GM23248 (cell line): ENCODE measurements at regions of chr5 and their contacts with region 1.

Region 1: DNA sequence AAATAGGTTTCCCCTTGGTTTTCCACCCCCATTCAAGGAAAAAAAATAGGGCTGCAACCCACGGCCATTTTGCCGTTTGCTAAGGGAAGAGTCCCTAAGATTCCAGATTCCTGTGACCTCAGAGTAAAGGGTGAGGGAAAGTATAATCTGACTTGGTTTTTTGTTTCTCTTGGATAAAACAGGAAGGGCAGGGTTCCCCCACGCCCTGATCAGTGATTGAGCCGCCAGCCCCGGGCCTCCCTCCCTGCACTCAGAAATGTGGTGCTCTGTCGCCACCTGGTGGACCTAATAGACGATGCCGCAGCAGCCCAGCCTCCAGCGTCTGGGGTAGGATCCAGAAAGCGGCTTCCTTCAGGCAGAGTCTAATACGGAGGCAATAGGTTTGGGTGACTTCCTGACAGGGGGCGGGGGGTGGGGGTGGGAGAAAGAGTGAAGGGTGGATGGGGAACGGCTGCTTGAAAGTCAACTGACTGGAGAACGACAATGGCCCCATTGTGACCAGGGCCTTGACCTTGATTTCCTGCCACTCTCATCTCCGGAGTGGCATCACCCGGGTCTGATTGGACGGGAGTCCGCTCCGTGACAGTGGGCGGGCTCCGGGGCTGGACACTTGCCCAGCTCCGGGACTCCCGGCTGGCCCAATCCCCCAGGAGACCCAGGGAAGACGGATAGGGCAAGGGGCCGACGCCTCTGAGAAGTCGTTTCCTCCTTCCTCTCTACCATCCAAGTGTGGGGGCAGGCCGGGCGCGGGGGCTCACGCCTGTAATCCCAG is 17.8 kb upstream of the CYSTM1 start:
- DNase-seq: peak; percentile 89
- H3K4me3 ChIP-seq: peak overlapping the region; percentile 70
- H3K27ac ChIP-seq: no peak overlapping the region
- H3K4me1 ChIP-seq: peaks cover 5% of the 10 kb centered on the region; the same call in 1 of the 2 replicates
- H3K27me3 ChIP-seq: no peaks in the 10 kb centered on the region

Region 2: GRCh38 chr5:139787568-139788293 is 369.5 kb before region 1 on chr5:
- in situ Hi-C with region 1: loop called (anchors 25 kb)
- DNase-seq: peak; percentile 83
- H3K4me3 ChIP-seq: peak overlapping the region; percentile 74
- H3K27ac ChIP-seq: no peak overlapping the region
- H3K4me1 ChIP-seq: no peaks in the 10 kb centered on the region; the same call in 1 of the 2 replicates
- H3K27me3 ChIP-seq: peaks cover 15% of the 10 kb centered on the region

Region 3: GRCh38 chr5:139882961-139883539 is 274.2 kb before region 1 on chr5:
- in situ Hi-C with region 1: no loop called
- DNase-seq: no peak
- H3K4me3 ChIP-seq: no peak overlapping the region
- H3K27ac ChIP-seq: no peak overlapping the region
- H3K4me1 ChIP-seq: no peaks in the 10 kb centered on the region
- H3K27me3 ChIP-seq: peaks cover 20% of the 10 kb centered on the region

Region 4: DNA sequence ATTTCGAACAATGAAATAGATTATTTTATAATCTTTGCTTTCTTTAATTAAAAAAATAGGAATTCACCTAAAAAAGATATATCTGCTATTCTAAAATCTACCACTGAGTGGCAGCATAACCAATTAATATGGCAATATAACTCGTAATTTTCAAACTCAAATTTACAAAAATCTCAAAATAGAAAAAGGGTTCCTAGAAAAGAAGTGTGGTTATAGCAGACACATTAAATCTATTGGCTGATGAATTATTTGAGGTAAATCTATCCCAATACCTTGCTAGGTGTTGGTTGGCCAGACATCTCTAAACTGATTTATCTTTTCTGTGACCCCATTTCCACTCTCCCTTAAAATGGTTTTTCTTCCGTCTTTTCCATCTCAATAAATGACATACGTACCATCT is 83.9 kb before region 1 on chr5:
- in situ Hi-C with region 1: loop called (anchors 5 kb)
- DNase-seq: peak; percentile 41
- H3K4me3 ChIP-seq: no peak overlapping the region
- H3K27ac ChIP-seq: no peak overlapping the region
- H3K4me1 ChIP-seq: no peaks in the 10 kb centered on the region
- H3K27me3 ChIP-seq: peaks cover 10% of the 10 kb centered on the region; the same call in 1 of the 2 replicates

Region 5: GRCh38 chr5:140664359-140665119 is 507.3 kb after region 1 on chr5 and contains the start of gene WDR55:
- in situ Hi-C with region 1: no loop called
- DNase-seq: peak; percentile 98
- H3K4me3 ChIP-seq: peak within 1 kb of the TSS; percentile 79
- H3K27ac ChIP-seq: peak within 1 kb of the TSS; percentile 92
- H3K4me1 ChIP-seq: peaks cover 9% of the 10 kb centered on the region
- H3K27me3 ChIP-seq: no peaks in the 10 kb centered on the region
- total RNA-seq, gene WDR55: 17.5 and 19.6 TPM in 2 replicates